ENCODE measurements at regions of chr6 and their contacts with region 1.

Region 1: GRCh38 chr6:132218059-132218696 is 183.1 kb downstream of the MOXD1 start:
- DNase-seq: peak; percentile 38
- ATAC-seq: no peak
- H3K4me3 ChIP-seq: no peak overlapping the region
- H3K4me3 Mint-ChIP-seq: no peak overlapping the region
- H3K27ac ChIP-seq: no peak overlapping the region
- H3K27ac Mint-ChIP-seq: no peak overlapping the region
- H3K4me1 ChIP-seq: no peaks in the 10 kb centered on the region
- H3K4me1 Mint-ChIP-seq: no peaks in the 10 kb centered on the region
- H3K27me3 ChIP-seq: no peaks in the 10 kb centered on the region
- H3K27me3 Mint-ChIP-seq: peaks cover 10% of the 10 kb centered on the region
- CTCF ChIP-seq: peak; percentile 82

Region 2: DNA sequence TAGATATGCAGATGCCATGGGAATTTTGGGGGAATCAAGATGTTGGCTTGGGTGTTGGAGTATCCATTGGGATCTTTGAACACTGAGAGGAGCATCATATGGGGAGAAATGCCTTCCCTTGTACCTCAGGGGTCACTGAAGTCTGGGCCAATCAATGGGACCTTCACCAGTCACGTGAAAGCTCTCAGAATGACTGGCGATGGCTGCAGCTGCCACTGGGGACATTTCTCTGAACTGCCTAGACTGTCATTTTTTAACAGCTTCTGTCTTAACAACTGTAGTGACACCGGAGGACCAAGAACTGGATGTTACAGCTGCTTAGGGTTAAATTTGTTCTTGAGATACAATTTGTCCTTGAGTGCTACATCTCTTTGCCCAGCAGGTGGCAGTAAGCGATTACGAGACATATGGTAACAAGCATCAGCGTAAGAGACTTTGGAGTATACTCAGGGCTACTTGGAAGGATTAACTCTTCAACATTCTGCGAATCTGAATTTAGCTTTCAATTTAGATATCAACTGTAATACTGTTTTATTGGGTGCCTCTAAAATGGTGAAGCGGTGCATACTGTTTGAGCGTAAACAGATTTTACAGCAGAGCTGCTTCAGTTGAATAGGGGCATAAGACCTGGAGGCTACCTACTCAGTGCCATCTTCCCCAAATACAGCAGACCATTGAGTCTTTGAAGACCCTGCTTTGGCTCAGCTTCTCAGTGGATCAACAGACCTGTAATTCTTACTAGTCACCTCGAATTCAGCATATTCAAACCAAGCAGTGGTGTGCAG is 303.0 kb before region 1 on chr6:
- CTCF ChIA-PET with region 1: interaction called, 42 read pairs
- POLR2A ChIA-PET with region 1: no interaction called
- intact Hi-C with region 1: loop called (anchors 1 kb)
- DNase-seq: peak; percentile 75
- ATAC-seq: peak; percentile 80
- H3K4me3 ChIP-seq: no peak overlapping the region
- H3K4me3 Mint-ChIP-seq: no peak overlapping the region
- H3K27ac ChIP-seq: no peak overlapping the region
- H3K27ac Mint-ChIP-seq: no peak overlapping the region
- H3K4me1 ChIP-seq: peaks cover 17 to 20% of the 10 kb centered on the region in 2 donors
- H3K4me1 Mint-ChIP-seq: peaks cover 21% of the 10 kb centered on the region
- H3K27me3 ChIP-seq: peaks cover 0 to 27% (median 12%) of the 10 kb centered on the region in 4 experiments
- H3K27me3 Mint-ChIP-seq: peaks cover 39% of the 10 kb centered on the region
- CTCF ChIP-seq: peak; percentile 88

Region 3: GRCh38 chr6:131923356-131923755 is 294.8 kb before region 1 on chr6:
- CTCF ChIA-PET with region 1: interaction called, 88 read pairs
- POLR2A ChIA-PET with region 1: no interaction called
- intact Hi-C with region 1: loop called (anchors 1 kb)
- DNase-seq: peak; percentile 62
- ATAC-seq: peak; percentile 53
- H3K4me3 ChIP-seq: no peak overlapping the region
- H3K4me3 Mint-ChIP-seq: no peak overlapping the region
- H3K27ac ChIP-seq: no peak overlapping the region
- H3K27ac Mint-ChIP-seq: no peak overlapping the region
- H3K4me1 ChIP-seq: no peaks in the 10 kb centered on the region
- H3K4me1 Mint-ChIP-seq: no peaks in the 10 kb centered on the region
- H3K27me3 ChIP-seq: peaks cover 0 to 13% (median 0%) of the 10 kb centered on the region in 4 experiments
- H3K27me3 Mint-ChIP-seq: peaks cover 4% of the 10 kb centered on the region
- CTCF ChIP-seq: peak; percentile 67

Region 4: GRCh38 chr6:131949909-131950766 is 268.0 kb before region 1 on chr6:
- CTCF ChIA-PET with region 1: interaction called, 11 read pairs
- POLR2A ChIA-PET with region 1: interaction called, 3 read pairs
- intact Hi-C with region 1: loop called (anchors 1 kb)
- DNase-seq: peak; percentile 64
- ATAC-seq: peak; percentile 68
- H3K4me3 ChIP-seq: peak overlapping the region; percentile 15 to 64 (median 57)
- H3K4me3 Mint-ChIP-seq: peak overlapping the region; percentile 93
- H3K27ac ChIP-seq: no peak overlapping the region
- H3K27ac Mint-ChIP-seq: no peak overlapping the region
- H3K4me1 ChIP-seq: peaks cover 11 to 12% of the 10 kb centered on the region in 2 donors
- H3K4me1 Mint-ChIP-seq: peaks cover 25% of the 10 kb centered on the region
- H3K27me3 ChIP-seq: peaks cover 0 to 19% (median 15%) of the 10 kb centered on the region in 4 experiments
- H3K27me3 Mint-ChIP-seq: peaks cover 46% of the 10 kb centered on the region
- CTCF ChIP-seq: peak; percentile 33

Region 5: GRCh38 chr6:131960371-131961133 is 257.6 kb before region 1 on chr6:
- CTCF ChIA-PET with region 1: interaction called, 7 read pairs
- POLR2A ChIA-PET with region 1: no interaction called
- intact Hi-C with region 1: loop called (anchors 1 kb)
- DNase-seq: no peak
- ATAC-seq: no peak
- H3K4me3 ChIP-seq: no peak overlapping the region
- H3K4me3 Mint-ChIP-seq: no peak overlapping the region
- H3K27ac ChIP-seq: no peak overlapping the region
- H3K27ac Mint-ChIP-seq: no peak overlapping the region
- H3K4me1 ChIP-seq: no peaks in the 10 kb centered on the region
- H3K4me1 Mint-ChIP-seq: no peaks in the 10 kb centered on the region
- H3K27me3 ChIP-seq: peaks cover 0 to 2% (median 0%) of the 10 kb centered on the region in 4 experiments
- H3K27me3 Mint-ChIP-seq: peaks cover 7% of the 10 kb centered on the region
- CTCF ChIP-seq: peak; percentile 17

Measured in B cell (primary cell).